ENCODE measurements at regions of chr3 and their contacts with region 1.

Region 1: DNA sequence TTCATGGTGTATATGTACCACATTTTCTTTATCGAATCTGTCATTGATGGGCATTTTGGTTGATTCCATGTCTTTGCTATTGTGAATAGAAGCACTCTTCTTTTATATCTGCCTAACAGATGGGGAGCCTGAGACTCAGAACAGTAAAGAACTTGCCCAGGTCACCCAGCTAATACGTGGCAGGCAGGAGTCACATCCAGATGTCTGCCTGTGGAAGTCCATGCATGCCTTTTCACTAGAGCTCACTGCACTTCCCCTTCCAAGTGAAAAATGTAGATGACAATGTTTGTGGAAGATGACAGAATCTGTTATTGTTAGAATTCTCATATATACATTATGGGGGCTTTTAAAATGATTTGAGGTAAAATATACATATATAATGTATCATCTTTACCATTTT is 165.0 kb downstream of the PDZRN3 start:
- DNase-seq: no peak
- ATAC-seq: no peak
- H3K4me3 ChIP-seq: no peak overlapping the region
- H3K27ac ChIP-seq: no peak overlapping the region
- H3K4me1 ChIP-seq: no peaks in the 10 kb centered on the region
- H3K27me3 ChIP-seq: no peaks in the 10 kb centered on the region

Region 2: GRCh38 chr3:73379465-73379864 is 80.2 kb before region 1 on chr3:
- intact Hi-C with region 1: no loop called
- DNase-seq: no peak
- ATAC-seq: no peak
- H3K4me3 ChIP-seq: no peak overlapping the region
- H3K27ac ChIP-seq: no peak overlapping the region
- H3K4me1 ChIP-seq: no peaks in the 10 kb centered on the region
- H3K27me3 ChIP-seq: no peaks in the 10 kb centered on the region

Region 3: GRCh38 chr3:73502609-73503583 is 43.2 kb after region 1 on chr3:
- intact Hi-C with region 1: loop called in 1 of 2 experiments (anchors 5 kb)
- DNase-seq: peak; percentile 73 to 87
- ATAC-seq: peak; percentile 77
- H3K4me3 ChIP-seq: no peak overlapping the region
- H3K27ac ChIP-seq: no peak overlapping the region
- H3K4me1 ChIP-seq: peaks cover 9 to 14% of the 10 kb centered on the region in 2 donors
- H3K27me3 ChIP-seq: no peaks in the 10 kb centered on the region

Measured in aorta (tissue), 5 donors.